OCI-LY7 (cell line): ENCODE measurements at regions of chr19 and their contacts with region 1.

Region 1: DNA sequence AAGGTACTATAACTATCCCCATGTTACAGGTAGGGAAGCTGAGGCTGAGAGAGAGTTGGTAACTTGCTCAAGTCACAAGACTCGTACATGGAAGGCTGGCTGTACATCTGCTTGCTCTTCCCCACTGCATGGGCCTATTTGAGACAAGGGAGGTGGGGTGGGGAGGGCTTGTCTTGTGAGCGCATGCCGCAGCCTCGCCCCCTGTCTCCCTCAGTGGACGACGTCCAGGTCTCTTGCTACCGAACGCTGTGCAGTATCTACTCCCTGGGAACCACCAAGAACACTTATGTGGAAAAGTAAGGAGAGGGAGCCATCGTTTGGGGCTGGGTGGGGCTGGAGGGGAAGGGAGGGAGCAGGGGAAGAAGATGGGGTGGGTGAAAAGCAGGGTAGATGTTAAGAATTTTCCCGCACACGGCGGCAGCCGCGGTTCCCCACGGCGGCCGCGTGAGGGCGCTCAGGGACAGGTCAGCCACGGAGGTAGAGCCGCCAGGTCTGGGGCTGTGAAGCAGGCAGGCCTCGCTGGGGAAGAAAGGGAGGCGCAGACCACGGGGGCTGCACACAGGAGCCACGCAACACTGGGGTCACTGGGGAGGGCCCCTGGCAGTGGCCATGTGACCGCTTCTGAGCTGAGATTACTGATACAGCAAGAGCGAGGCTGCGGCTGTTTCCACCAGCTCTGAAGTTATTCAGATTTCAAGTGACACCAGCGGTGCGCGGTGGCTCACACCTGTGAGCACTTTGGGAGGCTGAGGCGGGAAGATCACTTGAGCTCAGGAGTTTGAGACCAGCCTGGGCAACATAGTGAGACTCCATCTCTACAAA is 81.5 kb downstream of the RYR1 start:
- DNase-seq: peak; percentile 71
- H3K4me3 ChIP-seq: no peak overlapping the region
- H3K27ac ChIP-seq: no peak overlapping the region
- H3K4me1 ChIP-seq: no peaks in the 10 kb centered on the region
- CTCF ChIP-seq: peak; percentile 91

Region 2: GRCh38 chr19:38478273-38478967 is 36.6 kb before region 1 on chr19:
- CTCF ChIA-PET with region 1: no interaction called
- POLR2A ChIA-PET with region 1: no interaction called
- intact Hi-C with region 1: no loop called
- DNase-seq: peak; percentile 44
- H3K4me3 ChIP-seq: no peak overlapping the region
- H3K27ac ChIP-seq: no peak overlapping the region
- H3K4me1 ChIP-seq: no peaks in the 10 kb centered on the region
- CTCF ChIP-seq: peak; percentile 64

Region 3: GRCh38 chr19:38634757-38635482 is 119.9 kb after region 1 on chr19:
- CTCF ChIA-PET with region 1: no interaction called
- POLR2A ChIA-PET with region 1: no interaction called
- intact Hi-C with region 1: loop called (anchors 1 kb)
- DNase-seq: peak; percentile 70
- H3K4me3 ChIP-seq: no peak overlapping the region
- H3K27ac ChIP-seq: no peak overlapping the region
- H3K4me1 ChIP-seq: peaks cover 12% of the 10 kb centered on the region
- CTCF ChIP-seq: peak; percentile 91

Region 4: DNA sequence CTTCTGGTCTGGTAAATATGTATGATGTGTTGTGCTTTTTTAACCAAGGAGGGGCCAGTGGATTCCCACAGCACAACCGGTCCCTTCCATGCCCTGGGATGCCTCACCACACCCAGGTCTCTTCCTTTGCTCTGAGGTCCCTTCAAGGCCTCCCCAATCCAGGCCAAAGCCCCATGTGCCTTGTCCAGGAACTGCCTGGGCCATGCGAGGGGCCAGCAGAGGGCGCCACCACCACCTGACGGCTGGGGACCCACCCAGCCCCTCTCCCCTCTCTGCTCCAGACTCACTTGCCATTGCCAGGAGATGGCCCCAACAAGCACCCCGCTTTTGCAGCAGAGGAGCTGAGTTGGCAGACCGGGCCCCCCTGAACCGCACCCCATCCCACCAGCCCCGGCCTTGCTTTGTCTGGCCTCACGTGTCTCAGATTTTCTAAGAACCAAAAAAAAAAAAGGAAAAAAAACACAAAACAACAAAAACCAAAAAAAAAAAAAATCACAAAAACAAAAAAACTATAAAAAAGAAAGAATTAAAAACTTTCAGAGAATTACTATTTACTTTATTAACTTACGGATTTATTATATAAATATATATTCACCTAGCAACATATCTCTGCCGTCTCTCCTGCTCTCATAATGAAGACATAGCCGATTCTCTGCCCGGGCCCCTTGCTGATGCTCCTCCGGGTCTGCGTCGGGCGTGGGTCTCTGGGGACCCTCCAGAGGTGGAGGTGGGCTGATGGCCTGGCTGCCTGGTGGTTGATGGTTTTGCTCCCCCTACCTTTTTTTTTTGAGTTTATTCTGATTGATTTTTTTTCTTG is 214.8 kb after region 1 on chr19:
- CTCF ChIA-PET with region 1: no interaction called
- POLR2A ChIA-PET with region 1: no interaction called
- intact Hi-C with region 1: loop called (anchors 10 kb)
- DNase-seq: peak; percentile 73
- H3K4me3 ChIP-seq: no peak overlapping the region
- H3K27ac ChIP-seq: no peak overlapping the region
- H3K4me1 ChIP-seq: peaks cover 14% of the 10 kb centered on the region
- CTCF ChIP-seq: peak; percentile 91